ENCODE measurements at regions of chr15 and their contacts with region 1.

Region 1: DNA sequence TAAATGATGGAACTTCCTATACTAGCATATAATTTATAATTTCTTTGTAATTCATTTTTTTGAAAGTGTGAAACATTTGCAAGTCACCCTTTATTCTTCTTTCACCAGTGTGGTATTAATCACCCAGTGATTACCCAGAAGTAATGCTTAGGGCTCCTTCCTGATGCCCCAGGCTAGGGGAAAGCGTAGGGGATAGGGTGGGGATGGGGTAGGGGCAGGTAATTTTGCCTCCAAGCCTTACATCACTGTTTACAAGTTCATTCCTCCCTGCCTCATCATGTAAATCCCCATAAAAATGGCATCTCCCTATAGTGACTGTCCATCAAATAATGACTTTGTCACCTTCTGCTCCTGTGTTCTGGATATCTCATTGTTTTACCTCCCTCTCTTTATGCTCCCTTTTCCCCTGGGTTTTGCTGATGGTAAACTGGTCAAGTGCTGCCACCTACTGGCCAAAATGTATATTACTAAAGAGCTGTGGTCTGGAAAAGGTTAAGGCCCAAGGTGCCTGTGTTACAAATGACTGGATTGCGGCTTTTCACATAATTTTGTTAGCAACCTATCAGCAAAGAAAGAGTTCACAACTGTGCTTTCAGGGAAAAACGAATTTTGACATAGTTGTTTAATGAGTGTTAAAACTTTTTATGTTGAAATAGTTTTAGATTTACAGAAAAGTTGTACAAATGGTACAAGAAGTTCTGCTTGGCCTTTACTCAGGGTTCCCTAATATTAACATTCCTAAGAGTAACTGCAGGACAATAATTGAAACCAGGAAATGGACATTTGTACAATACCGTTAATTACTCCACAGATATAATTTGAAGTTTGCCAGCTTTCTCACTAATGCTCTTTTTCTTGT is 54.7 kb downstream of the ONECUT1 start:
- DNase-seq: peak; percentile 87
- H3K4me3 ChIP-seq: no peak overlapping the region
- H3K27ac ChIP-seq: no peak overlapping the region
- H3K4me1 ChIP-seq: no peaks in the 10 kb centered on the region
- H3K27me3 ChIP-seq: no peaks in the 10 kb centered on the region
- CTCF ChIP-seq: peak; percentile 79

Region 2: GRCh38 chr15:51971375-51972133 is 763.9 kb before region 1 on chr15 and contains the start of gene LEO1:
- CTCF ChIA-PET with region 1: no interaction called
- POLR2A ChIA-PET with region 1: no interaction called
- intact Hi-C with region 1: loop called (anchors 10 kb)
- DNase-seq: peak; percentile 98
- H3K4me3 ChIP-seq: peak within 1 kb of the TSS; percentile 89
- H3K27ac ChIP-seq: peak within 1 kb of the TSS; percentile 92
- H3K4me1 ChIP-seq: peaks cover 6% of the 10 kb centered on the region
- H3K27me3 ChIP-seq: no peaks in the 10 kb centered on the region
- CTCF ChIP-seq: peak; percentile 61
- total RNA-seq, gene LEO1: 37.5 and 40.0 TPM in 2 replicates

Region 3: DNA sequence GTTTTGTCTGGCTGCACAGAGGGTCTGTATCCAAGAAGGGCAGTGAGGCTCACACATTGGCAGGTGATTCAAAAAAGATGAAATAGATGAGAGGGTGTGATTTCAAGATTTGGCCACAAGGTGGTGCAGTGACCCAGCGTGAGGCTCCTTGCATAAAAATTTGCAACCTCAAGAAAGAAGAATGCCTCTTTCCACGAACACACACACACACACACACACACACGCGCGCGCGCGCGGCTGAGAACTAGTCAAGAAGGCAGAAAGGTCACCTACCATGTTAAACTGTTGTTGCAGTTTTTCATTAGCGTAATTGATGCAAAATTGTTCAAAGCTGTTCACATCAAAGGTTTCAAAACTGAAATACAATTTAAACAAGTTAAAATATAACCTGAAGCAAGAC is 479.1 kb before region 1 on chr15:
- CTCF ChIA-PET with region 1: interaction called, 17 read pairs
- POLR2A ChIA-PET with region 1: no interaction called
- intact Hi-C with region 1: loop called (anchors 1 kb)
- DNase-seq: peak; percentile 82
- H3K4me3 ChIP-seq: no peak overlapping the region
- H3K27ac ChIP-seq: no peak overlapping the region
- H3K4me1 ChIP-seq: peaks cover 5% of the 10 kb centered on the region
- H3K27me3 ChIP-seq: no peaks in the 10 kb centered on the region
- CTCF ChIP-seq: peak; percentile 81

Region 4: GRCh38 chr15:52331490-52332240 is 403.8 kb before region 1 on chr15:
- CTCF ChIA-PET with region 1: interaction called, 7 read pairs
- POLR2A ChIA-PET with region 1: no interaction called
- intact Hi-C with region 1: loop called (anchors 1 kb)
- DNase-seq: peak; percentile 52
- H3K4me3 ChIP-seq: no peak overlapping the region
- H3K27ac ChIP-seq: no peak overlapping the region
- H3K4me1 ChIP-seq: no peaks in the 10 kb centered on the region
- H3K27me3 ChIP-seq: no peaks in the 10 kb centered on the region
- CTCF ChIP-seq: peak; percentile 58